ENCODE measurements at regions of chr18 and their contacts with region 1.

Region 1: GRCh38 chr18:13726232-13726971 is at the starts of genes FAM210A and RNMT:
- DNase-seq: peak; percentile 95 to 97
- H3K4me3 ChIP-seq: peak within 1 kb of the TSS; percentile 81 to 98 (median 86)
- H3K27ac ChIP-seq: peak within 1 kb of the TSS; percentile 74 to 94 (median 87)
- H3K4me1 ChIP-seq: peaks cover 11 to 12% of the 10 kb centered on the region in 2 donors
- H3K27me3 ChIP-seq: no peaks in the 10 kb centered on the region
- CTCF ChIP-seq: peak in 2 of 6 experiments; percentile 6 to 34
- POLR2A ChIP-seq: peak; percentile 16 to 81
- total RNA-seq, gene FAM210A: 9.1 to 13.8 (median 12.1) TPM
- total RNA-seq, gene RNMT: 26.7 to 45.9 (median 34.0) TPM

Region 2: GRCh38 chr18:13548966-13549879 is 177.2 kb before region 1 on chr18:
- intact Hi-C with region 1: loop called (anchors 10 kb)
- DNase-seq: no peak
- H3K4me3 ChIP-seq: no peak overlapping the region
- H3K27ac ChIP-seq: peak overlapping the region in 1 of 3 donors; percentile 43
- H3K4me1 ChIP-seq: peaks cover 13 to 34% of the 10 kb centered on the region in 2 donors
- H3K27me3 ChIP-seq: no peaks in the 10 kb centered on the region
- CTCF ChIP-seq: no peak
- POLR2A ChIP-seq: no peak

Region 3: DNA sequence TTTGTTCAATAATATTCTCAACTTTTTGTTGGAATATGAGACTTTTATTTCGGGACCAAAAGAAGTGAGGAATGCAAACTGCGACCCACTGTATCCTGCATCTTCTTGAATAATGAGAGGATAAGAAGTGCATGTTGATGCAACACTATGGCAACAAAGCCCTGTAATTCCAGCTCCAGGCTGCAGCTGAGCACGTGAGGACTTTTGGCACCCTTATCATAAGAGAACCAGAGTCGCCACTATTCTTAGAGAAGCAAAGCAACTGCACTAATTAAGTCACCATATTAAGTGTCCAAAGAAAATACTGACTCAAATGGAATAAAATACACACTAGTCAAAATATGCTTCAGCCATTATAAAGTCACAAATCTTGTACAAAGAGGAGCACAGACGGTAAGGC is 65.9 kb before region 1 on chr18:
- intact Hi-C with region 1: loop called (anchors 10 kb)
- DNase-seq: peak in 1 of 2 donors; percentile 42
- H3K4me3 ChIP-seq: no peak overlapping the region
- H3K27ac ChIP-seq: no peak overlapping the region
- H3K4me1 ChIP-seq: peaks cover 11 to 14% of the 10 kb centered on the region in 2 donors
- H3K27me3 ChIP-seq: no peaks in the 10 kb centered on the region
- CTCF ChIP-seq: no peak
- POLR2A ChIP-seq: no peak